ENCODE measurements at regions of chr7 and their contacts with region 1.

Region 1: DNA sequence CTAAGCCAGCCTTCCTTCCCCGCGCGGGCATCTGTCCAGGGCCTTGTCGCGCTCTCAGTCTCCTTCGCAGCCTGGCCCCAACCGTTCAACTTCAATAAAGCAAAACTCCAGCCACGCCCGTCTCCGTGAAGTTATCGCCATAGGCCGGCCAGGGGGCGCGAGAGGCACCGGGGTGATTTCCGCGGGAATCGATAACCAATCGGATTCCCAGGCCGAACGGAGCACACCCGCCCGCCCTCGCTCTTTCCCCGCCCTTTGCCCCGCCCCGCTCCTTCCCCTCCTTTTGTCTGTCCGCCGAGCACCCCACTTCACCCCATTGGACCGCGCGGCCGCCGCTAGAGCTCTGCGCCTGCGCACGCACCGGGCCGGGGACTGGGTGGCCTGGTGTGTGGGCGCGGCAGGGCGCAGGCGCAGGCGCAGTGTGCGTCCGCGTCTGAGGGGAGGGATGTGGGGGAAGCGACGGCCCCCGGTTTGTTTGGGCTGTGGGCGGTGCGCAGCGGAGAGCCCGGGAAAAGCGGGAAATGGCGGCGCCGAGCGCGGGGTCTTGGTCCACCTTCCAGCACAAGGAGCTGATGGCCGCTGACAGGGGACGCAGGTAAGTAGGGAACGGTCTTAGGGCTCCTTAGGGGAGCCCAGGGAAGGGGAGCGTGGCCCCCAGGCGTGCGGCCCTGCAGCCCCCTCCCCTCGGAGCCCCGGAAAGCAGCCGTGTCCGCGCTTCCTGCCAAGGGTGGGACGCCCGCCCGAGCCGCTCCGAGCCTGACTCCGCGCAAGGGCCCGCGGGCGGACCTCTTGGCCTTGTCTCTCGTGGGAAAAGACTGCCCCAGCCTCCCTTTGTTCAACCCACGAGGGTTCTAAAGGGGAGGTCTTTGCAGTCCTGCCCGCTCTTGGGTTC is at the start of gene CASP2:
- DNase-seq: peak; percentile 97 to 100 (median 99)
- ATAC-seq: peak; percentile 95
- H3K4me3 ChIP-seq: peak within 1 kb of the TSS; percentile 95
- H3K4me3 Mint-ChIP-seq: peak within 1 kb of the TSS; percentile 96
- H3K27ac ChIP-seq: peak within 1 kb of the TSS; percentile 68 to 76
- H3K27ac Mint-ChIP-seq: peak within 1 kb of the TSS; percentile 88
- H3K4me1 ChIP-seq: peaks cover 43% of the 10 kb centered on the region
- H3K4me1 Mint-ChIP-seq: peaks cover 65% of the 10 kb centered on the region
- H3K27me3 ChIP-seq: no peaks in the 10 kb centered on the region
- H3K27me3 Mint-ChIP-seq: no peaks in the 10 kb centered on the region
- CTCF ChIP-seq: peak; percentile 57
- total RNA-seq, gene CASP2: 19.1 to 21.9 TPM

Region 2: GRCh38 chr7:142838461-142839213 is 449.5 kb before region 1 on chr7:
- CTCF ChIA-PET with region 1: no interaction called
- POLR2A ChIA-PET with region 1: no interaction called
- intact Hi-C with region 1: no loop called
- DNase-seq: no peak
- ATAC-seq: no peak
- H3K4me3 ChIP-seq: no peak overlapping the region
- H3K4me3 Mint-ChIP-seq: no peak overlapping the region
- H3K27ac ChIP-seq: no peak overlapping the region
- H3K27ac Mint-ChIP-seq: no peak overlapping the region
- H3K4me1 ChIP-seq: no peaks in the 10 kb centered on the region
- H3K4me1 Mint-ChIP-seq: peaks cover 18% of the 10 kb centered on the region
- H3K27me3 ChIP-seq: no peaks in the 10 kb centered on the region
- H3K27me3 Mint-ChIP-seq: no peaks in the 10 kb centered on the region
- CTCF ChIP-seq: no peak

Region 3: DNA sequence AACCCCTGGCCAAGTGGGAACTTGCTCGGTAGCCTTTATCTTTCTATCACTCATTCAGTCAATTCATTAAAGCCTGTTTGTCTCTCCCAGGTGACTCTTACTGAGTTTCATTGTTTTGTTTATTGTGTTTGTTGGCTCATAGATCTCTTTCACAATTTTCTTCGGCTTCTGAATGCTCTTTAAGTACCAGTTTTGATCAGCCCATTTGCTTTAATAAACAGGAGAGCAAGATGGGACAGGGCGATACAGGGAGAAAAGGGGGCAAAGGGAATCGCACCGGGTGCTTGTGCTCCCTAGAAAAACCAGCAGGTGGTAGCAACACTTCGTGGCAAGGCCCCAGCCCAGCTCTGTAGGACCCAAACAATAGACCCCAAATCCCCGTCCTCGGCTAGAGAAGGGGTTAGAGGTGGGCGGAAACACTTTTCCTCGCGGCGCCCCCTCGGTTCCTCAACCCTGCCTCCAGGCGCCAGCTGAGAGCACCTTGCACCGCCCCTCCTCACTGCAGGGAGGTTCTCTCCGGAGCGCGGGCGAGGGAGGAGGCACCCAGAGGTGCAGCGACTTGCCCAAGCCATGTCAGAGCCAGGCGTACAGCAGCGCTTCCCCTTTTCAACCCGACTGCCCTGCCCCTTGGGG is 434.3 kb before region 1 on chr7:
- CTCF ChIA-PET with region 1: no interaction called
- POLR2A ChIA-PET with region 1: no interaction called
- intact Hi-C with region 1: loop called in 1 of 2 experiments (anchors 10 kb)
- DNase-seq: peak; percentile 44 to 83 (median 60)
- ATAC-seq: peak; percentile 82
- H3K4me3 ChIP-seq: peak overlapping the region; percentile 87
- H3K4me3 Mint-ChIP-seq: peak overlapping the region; percentile 95
- H3K27ac ChIP-seq: peak overlapping the region; percentile 24 to 41
- H3K27ac Mint-ChIP-seq: peak overlapping the region; percentile 85
- H3K4me1 ChIP-seq: peaks cover 30% of the 10 kb centered on the region
- H3K4me1 Mint-ChIP-seq: peaks cover 52% of the 10 kb centered on the region
- H3K27me3 ChIP-seq: no peaks in the 10 kb centered on the region
- H3K27me3 Mint-ChIP-seq: no peaks in the 10 kb centered on the region
- CTCF ChIP-seq: peak; percentile 90

Region 4: GRCh38 chr7:143248761-143249354 is 39.3 kb before region 1 on chr7:
- CTCF ChIA-PET with region 1: interaction called, 3 read pairs
- POLR2A ChIA-PET with region 1: interaction called, 13 read pairs
- intact Hi-C with region 1: no loop called
- DNase-seq: no peak
- ATAC-seq: no peak
- H3K4me3 ChIP-seq: no peak overlapping the region
- H3K4me3 Mint-ChIP-seq: peak overlapping the region; percentile 23
- H3K27ac ChIP-seq: peak overlapping the region in 1 of 2 donors; percentile 10
- H3K27ac Mint-ChIP-seq: no peak overlapping the region
- H3K4me1 ChIP-seq: peaks cover 54% of the 10 kb centered on the region
- H3K4me1 Mint-ChIP-seq: peaks cover 97% of the 10 kb centered on the region
- H3K27me3 ChIP-seq: no peaks in the 10 kb centered on the region
- H3K27me3 Mint-ChIP-seq: no peaks in the 10 kb centered on the region
- CTCF ChIP-seq: no peak

Region 5: DNA sequence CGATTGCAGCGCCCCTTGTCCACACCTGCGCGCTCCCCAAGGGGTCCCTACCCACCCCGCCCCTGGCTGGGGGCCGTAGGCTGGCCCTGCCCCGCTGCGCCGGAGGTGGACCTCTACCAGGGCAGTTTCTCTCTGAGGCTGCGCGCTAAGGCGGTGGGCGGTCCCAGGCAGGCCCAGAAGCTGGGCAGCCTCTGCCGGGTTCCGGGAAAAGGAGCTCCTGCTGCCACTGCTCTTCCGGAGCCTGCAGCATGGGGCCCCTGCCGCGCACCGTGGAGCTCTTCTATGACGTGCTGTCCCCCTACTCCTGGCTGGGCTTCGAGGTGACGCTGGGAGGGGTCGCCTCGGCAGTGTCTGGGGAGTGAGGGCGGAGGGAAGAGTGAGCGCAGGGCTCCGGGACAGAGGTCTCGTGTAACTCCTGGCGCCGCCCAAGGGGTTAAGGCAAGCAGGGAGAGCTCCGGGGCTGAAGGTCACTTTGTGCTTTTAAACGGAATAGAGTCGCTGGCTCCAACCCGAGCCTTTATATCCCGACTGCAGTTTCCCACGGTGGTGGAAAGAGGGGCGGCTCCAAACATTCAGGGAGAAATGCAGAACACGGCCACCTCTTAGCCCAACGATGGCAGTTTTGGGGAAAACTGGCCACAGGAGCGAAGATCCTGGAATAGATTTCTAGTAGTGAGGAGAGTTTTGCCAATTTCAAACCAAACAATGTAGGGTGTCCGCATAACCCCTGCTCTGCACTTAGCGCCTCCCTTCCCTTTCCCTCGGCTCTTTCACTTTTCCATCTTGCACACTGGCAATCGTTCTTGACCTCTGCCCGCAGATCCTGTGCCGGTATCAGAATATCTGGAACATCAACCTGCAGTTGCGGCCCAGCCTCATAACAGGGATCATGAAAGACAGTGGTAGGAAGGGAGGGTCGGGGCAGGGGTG is 24.6 kb before region 1 on chr7 and contains the start of gene GSTK1:
- CTCF ChIA-PET with region 1: interaction called, 5 read pairs
- POLR2A ChIA-PET with region 1: interaction called, 32 read pairs
- intact Hi-C with region 1: loop called (anchors 1 to 2 kb)
- DNase-seq: peak; percentile 53 to 87 (median 77)
- ATAC-seq: peak; percentile 96
- H3K4me3 ChIP-seq: peak within 1 kb of the TSS; percentile 98
- H3K4me3 Mint-ChIP-seq: peak within 1 kb of the TSS; percentile 98
- H3K27ac ChIP-seq: peak within 1 kb of the TSS; percentile 74
- H3K27ac Mint-ChIP-seq: peak within 1 kb of the TSS; percentile 95
- H3K4me1 ChIP-seq: peaks cover 49% of the 10 kb centered on the region
- H3K4me1 Mint-ChIP-seq: peaks cover 64% of the 10 kb centered on the region
- H3K27me3 ChIP-seq: no peaks in the 10 kb centered on the region
- H3K27me3 Mint-ChIP-seq: no peaks in the 10 kb centered on the region
- CTCF ChIP-seq: no peak
- total RNA-seq, gene GSTK1: 245 to 259 TPM

Region 6: GRCh38 chr7:143299840-143300239 is 11.7 kb after region 1 on chr7:
- CTCF ChIA-PET with region 1: interaction called, 11 read pairs
- POLR2A ChIA-PET with region 1: interaction called, 12 read pairs
- intact Hi-C with region 1: no loop called
- DNase-seq: peak; percentile 52 to 83 (median 67)
- ATAC-seq: peak; percentile 100
- H3K4me3 ChIP-seq: no peak overlapping the region
- H3K4me3 Mint-ChIP-seq: no peak overlapping the region
- H3K27ac ChIP-seq: no peak overlapping the region
- H3K27ac Mint-ChIP-seq: no peak overlapping the region
- H3K4me1 ChIP-seq: peaks cover 11% of the 10 kb centered on the region
- H3K4me1 Mint-ChIP-seq: peaks cover 40% of the 10 kb centered on the region
- H3K27me3 ChIP-seq: no peaks in the 10 kb centered on the region
- H3K27me3 Mint-ChIP-seq: no peaks in the 10 kb centered on the region
- CTCF ChIP-seq: peak; percentile 70

Measured in CD4-positive, alpha-beta T cell (primary cell).